AG04449 (cell line): ENCODE measurements at regions of chr4 and their contacts with region 1.

Region 1: DNA sequence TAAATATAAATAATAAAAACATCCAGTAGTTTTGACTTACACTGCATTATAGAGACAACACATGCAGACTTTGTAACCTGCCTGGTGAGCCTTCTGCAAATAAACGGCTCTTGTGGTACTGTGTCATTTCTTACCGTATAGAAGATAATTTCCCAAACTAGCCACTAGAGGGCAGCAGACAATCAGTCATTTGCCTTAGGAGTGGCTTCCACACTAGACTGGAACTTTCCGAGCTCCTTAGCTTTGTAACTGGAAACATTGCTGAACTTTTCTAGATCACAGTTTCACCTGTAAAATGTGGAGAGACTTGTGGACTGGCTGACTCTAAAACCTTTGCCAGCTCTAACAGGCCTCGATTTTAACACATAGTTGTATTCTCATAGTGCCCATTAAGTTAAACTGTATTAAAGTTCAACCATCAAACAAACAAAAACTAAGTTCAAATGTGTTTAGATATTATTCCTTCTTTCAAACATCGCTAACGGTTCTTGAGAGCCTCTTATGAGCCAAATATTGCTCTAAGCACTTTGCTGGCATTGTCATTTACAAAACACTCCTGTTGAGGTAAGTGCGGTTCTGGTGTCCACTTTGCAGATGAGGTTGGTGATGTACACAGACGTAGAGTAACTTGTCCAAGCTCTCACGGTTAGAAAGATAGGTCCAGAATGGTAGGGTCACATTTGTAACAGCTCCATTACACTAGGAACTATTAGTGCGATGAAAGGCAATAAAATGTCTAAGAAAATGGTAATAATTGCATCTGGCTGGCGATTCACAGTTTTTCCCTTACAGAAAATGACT is 345.5 kb downstream of the ANK2 start:
- DNase-seq: peak; percentile 46
- H3K4me3 ChIP-seq: no peak overlapping the region
- CTCF ChIP-seq: peak; percentile 55

Region 2: GRCh38 chr4:113384600-113384999 is 10.3 kb before region 1 on chr4:
- CTCF ChIA-PET with region 1: interaction called, 11 read pairs
- POLR2A ChIA-PET with region 1: no interaction called
- DNase-seq: no peak
- H3K4me3 ChIP-seq: no peak overlapping the region
- CTCF ChIP-seq: no peak

Region 3: DNA sequence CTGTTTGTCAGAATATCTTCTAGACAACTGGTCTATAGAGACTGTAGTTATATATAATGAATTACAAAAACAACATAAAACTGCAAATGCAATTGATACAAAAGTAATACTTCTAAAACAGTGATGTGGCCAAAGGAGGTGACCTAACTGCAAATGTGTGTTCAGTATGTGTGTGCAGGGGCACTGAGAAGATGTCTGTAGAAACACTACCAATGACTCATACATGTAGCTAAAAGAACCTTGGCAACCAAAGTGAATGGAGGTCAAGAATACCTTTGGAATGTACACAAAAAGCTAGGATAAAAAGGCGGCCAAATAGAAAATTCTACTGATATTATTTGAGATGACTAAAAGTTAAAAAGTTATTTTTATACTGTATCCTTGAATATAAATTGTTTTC is 104.8 kb after region 1 on chr4:
- CTCF ChIA-PET with region 1: interaction called, 18 read pairs
- POLR2A ChIA-PET with region 1: no interaction called
- DNase-seq: peak; percentile 45
- H3K4me3 ChIP-seq: no peak overlapping the region
- CTCF ChIP-seq: no peak

Region 4: DNA sequence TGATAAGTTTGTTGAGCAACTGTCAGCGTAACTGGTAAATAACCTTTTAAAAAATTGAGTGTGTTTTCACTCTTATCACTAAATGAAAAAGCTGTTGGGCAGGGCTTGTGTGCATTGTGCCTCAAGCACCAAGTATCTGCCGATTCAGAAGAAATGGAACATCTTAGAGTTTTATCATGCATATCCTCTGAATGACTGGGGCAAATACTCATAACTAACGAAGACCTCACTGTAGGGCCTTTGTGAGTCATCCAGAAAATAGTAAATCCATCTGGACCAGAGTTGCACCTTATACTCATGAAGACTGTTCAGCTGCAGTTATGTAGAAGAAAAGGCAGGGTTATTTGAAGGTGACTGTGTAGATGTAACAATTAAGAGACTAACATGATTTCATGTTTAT is 144.5 kb after region 1 on chr4:
- CTCF ChIA-PET with region 1: interaction called, 19 read pairs
- POLR2A ChIA-PET with region 1: no interaction called
- DNase-seq: peak; percentile 42
- H3K4me3 ChIP-seq: no peak overlapping the region
- CTCF ChIP-seq: no peak

Region 5: GRCh38 chr4:114378306-114378903 is 983.5 kb after region 1 on chr4:
- CTCF ChIA-PET with region 1: interaction called, 52 read pairs
- POLR2A ChIA-PET with region 1: no interaction called
- DNase-seq: no peak
- H3K4me3 ChIP-seq: no peak overlapping the region
- CTCF ChIP-seq: peak; percentile 48

Region 6: DNA sequence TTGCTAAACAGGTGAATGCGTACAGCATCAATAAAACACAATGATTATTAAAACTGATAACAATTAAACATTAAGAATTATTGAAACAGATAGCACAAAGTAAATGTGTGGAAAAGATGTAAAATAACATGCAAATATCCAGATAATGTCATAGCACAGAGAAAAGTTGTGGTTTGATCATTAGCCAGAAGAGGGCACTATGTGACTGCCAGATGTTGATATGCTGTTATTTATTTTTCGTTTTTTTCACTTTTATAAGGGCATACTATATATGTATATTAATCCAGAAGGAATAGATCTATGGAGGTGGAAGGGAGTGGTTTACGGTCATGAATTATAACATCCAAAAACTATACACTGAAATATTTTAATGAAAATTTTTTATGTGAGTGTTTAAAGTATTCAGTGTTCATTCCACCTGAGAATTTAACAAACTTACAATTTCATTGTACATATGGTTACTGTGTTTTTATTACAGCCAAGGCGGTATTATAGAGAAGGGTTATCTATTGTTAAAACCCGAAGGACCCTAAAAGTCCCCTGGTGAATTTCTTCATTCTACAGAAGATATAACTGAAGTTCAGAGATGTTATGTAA is 991.8 kb after region 1 on chr4:
- CTCF ChIA-PET with region 1: interaction called, 52 read pairs
- POLR2A ChIA-PET with region 1: no interaction called
- DNase-seq: no peak
- H3K4me3 ChIP-seq: no peak overlapping the region
- CTCF ChIP-seq: peak; percentile 55